ENCODE measurements at regions of chr20 and their contacts with region 1.

Region 1: GRCh38 chr20:34069341-34070078 is 42.5 kb downstream of the EIF2S2 start:
- DNase-seq: peak; percentile 33 to 79 (median 46)
- ATAC-seq: peak; percentile 90
- H3K4me3 ChIP-seq: no peak overlapping the region
- H3K4me3 Mint-ChIP-seq: no peak overlapping the region
- H3K27ac ChIP-seq: no peak overlapping the region
- H3K27ac Mint-ChIP-seq: peak overlapping the region; percentile 39
- H3K4me1 ChIP-seq: peaks cover 12% of the 10 kb centered on the region
- H3K4me1 Mint-ChIP-seq: peaks cover 52% of the 10 kb centered on the region
- H3K27me3 ChIP-seq: no peaks in the 10 kb centered on the region
- H3K27me3 Mint-ChIP-seq: no peaks in the 10 kb centered on the region
- CTCF ChIP-seq: peak; percentile 78

Region 2: DNA sequence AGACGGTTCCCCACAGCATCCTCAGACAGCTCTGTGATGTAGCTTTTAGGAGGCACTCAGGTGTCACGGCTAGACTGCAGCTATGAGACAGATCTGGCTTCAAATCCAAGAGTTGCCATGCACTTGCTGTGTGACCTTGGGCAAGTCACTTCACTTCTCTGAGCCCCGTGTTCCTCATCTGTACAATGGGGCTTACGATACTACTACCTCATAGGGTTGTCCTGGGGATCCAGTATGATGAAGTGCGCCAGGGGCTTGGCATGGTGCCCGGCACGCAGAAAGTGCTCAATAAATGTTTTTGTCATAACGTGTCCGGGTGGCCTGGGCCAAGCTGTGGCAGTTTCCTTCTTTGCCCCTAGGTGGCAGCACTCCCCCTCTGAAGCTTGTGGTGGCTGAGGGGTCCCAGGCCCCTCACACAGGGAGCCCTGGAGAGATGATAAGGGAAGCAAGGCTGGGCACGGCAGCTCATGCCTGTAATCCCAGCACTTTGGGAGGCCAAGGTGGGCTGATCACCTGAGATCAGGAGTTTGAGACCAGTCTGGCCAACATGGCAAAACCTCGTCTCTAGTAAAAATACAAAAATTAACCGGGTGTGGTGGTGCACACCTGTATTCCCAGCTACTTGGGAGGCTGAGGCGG is 277.4 kb before region 1 on chr20:
- CTCF ChIA-PET with region 1: no interaction called
- POLR2A ChIA-PET with region 1: interaction called, 3 read pairs
- intact Hi-C with region 1: loop called (anchors 1 to 2 kb)
- DNase-seq: peak; percentile 27 to 68 (median 40)
- ATAC-seq: peak; percentile 65
- H3K4me3 ChIP-seq: no peak overlapping the region
- H3K4me3 Mint-ChIP-seq: no peak overlapping the region
- H3K27ac ChIP-seq: no peak overlapping the region
- H3K27ac Mint-ChIP-seq: no peak overlapping the region
- H3K4me1 ChIP-seq: peaks cover 8% of the 10 kb centered on the region
- H3K4me1 Mint-ChIP-seq: peaks cover 9% of the 10 kb centered on the region
- H3K27me3 ChIP-seq: no peaks in the 10 kb centered on the region
- H3K27me3 Mint-ChIP-seq: no peaks in the 10 kb centered on the region
- CTCF ChIP-seq: peak; percentile 83

Region 3: DNA sequence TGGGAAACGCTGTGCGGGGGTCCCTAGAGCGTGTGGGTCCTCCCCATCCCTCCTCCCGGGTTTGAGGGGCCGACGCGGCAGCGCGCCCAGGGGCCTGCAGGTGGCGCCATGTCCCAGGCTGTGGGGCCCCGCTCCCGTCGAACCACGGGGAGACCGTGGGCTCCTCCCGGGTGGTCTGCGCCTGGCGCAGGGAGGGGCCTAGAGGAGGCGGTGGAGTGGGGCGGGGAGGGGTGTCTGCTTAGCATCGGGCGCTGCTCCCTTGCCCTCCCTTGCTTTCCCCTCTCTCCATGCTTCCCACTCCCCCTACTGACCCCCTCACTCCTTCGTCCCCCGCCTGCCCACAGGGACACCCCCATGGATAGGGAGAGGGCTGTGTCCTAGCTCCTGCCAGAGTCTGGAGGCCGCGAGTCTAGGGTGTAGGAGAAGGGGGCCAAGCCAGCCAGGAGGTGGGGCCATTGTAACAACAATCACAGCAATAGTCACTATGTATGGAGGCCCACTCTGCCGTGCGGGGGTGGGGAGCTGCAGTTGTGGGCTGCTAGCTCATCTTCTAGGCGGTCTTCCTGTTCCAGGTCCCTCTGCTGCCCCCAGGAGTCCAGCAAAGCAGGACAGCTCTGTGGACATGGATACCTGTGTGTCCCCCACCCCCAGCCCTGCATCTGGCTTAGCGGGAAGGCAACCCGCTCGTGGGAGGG is 206.7 kb before region 1 on chr20:
- CTCF ChIA-PET with region 1: no interaction called
- POLR2A ChIA-PET with region 1: no interaction called
- intact Hi-C with region 1: loop called (anchors 2 kb)
- DNase-seq: peak in 13 of 14 experiments; percentile 18 to 65 (median 37)
- ATAC-seq: peak; percentile 37
- H3K4me3 ChIP-seq: no peak overlapping the region
- H3K4me3 Mint-ChIP-seq: no peak overlapping the region
- H3K27ac ChIP-seq: no peak overlapping the region
- H3K27ac Mint-ChIP-seq: no peak overlapping the region
- H3K4me1 ChIP-seq: peaks cover 32% of the 10 kb centered on the region
- H3K4me1 Mint-ChIP-seq: peaks cover 31% of the 10 kb centered on the region
- H3K27me3 ChIP-seq: no peaks in the 10 kb centered on the region
- H3K27me3 Mint-ChIP-seq: no peaks in the 10 kb centered on the region
- CTCF ChIP-seq: peak; percentile 62

Region 4: DNA sequence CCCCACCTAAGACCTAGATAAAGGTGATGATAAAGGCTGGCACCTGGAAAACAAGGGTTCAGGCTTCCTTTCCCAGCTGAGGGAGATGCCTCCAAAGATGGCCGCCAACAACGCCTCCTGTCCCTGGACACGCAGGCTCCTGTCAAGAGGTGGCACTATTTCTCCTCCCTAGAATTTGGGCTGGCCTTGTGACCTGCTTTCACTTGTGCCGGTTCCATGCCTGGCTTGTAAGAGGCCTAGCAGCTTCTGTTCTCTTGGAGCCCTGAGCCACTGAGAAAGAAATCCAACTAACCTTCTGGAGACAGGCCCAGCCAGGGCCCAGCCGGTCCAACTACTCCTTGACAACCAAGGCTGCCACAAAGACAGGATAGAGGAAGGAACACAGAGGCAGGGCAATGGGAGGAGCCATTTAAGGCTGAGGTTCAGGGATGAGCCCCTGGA is 136.0 kb before region 1 on chr20:
- CTCF ChIA-PET with region 1: interaction called, 11 read pairs
- POLR2A ChIA-PET with region 1: no interaction called
- intact Hi-C with region 1: loop called (anchors 1 to 5 kb)
- DNase-seq: peak; percentile 16 to 78 (median 38)
- ATAC-seq: peak; percentile 68
- H3K4me3 ChIP-seq: no peak overlapping the region
- H3K4me3 Mint-ChIP-seq: no peak overlapping the region
- H3K27ac ChIP-seq: no peak overlapping the region
- H3K27ac Mint-ChIP-seq: no peak overlapping the region
- H3K4me1 ChIP-seq: peaks cover 2% of the 10 kb centered on the region
- H3K4me1 Mint-ChIP-seq: no peaks in the 10 kb centered on the region
- H3K27me3 ChIP-seq: no peaks in the 10 kb centered on the region
- H3K27me3 Mint-ChIP-seq: no peaks in the 10 kb centered on the region
- CTCF ChIP-seq: peak; percentile 27

Measured in CD4-positive, alpha-beta T cell (primary cell).